ENCODE measurements at regions of chrX and their contacts with region 1.

Region 1: GRCh38 chrX:20266810-20267606 is at the start of gene RPS6KA3:
- DNase-seq: peak; percentile 80
- ATAC-seq: peak; percentile 83
- H3K4me3 Mint-ChIP-seq: peak within 1 kb of the TSS; percentile 92
- H3K27ac Mint-ChIP-seq: peak within 1 kb of the TSS; percentile 90
- H3K4me1 Mint-ChIP-seq: peaks cover 22% of the 10 kb centered on the region
- H3K27me3 Mint-ChIP-seq: no peaks in the 10 kb centered on the region
- CTCF ChIP-seq: no peak
- total RNA-seq, gene RPS6KA3: 36.1 and 40.5 TPM in 2 replicates

Region 2: DNA sequence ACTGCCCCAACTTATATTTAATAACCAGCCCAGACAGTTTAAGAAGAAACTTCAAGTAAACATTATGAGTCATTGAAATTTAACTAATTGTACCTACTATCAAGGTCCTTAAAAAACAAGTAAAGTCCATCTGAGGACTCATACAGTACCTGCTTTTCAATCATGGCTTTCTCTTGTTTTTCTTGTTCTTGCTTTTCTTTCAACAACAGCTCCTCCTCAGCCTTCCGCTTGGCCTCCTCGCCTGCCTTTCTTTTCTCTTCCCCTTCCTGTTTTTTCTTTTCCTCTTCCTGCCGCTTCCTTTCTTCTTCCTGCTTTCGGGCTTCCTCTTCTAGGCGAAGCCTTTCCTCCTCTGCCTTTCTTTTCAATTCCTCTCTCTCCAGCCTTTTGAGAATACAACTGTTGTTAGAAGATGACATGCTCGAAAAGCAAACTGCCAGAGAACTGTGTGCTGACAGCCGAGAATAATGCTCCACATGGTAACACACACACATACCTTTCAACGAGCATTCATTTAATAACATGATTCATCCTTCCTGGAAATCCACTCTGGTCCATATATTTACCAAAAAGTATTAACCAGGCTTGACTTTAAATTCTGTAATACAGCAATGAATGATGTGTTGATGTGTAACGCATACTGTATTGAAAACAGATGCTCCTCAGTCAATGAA is 250.9 kb before region 1 on chrX:
- CTCF ChIA-PET with region 1: no interaction called
- POLR2A ChIA-PET with region 1: no interaction called
- intact Hi-C with region 1: no loop called
- DNase-seq: no peak
- ATAC-seq: no peak
- H3K4me3 Mint-ChIP-seq: no peak overlapping the region
- H3K27ac Mint-ChIP-seq: no peak overlapping the region
- H3K4me1 Mint-ChIP-seq: peaks cover 11% of the 10 kb centered on the region
- H3K27me3 Mint-ChIP-seq: no peaks in the 10 kb centered on the region
- CTCF ChIP-seq: no peak

Region 3: DNA sequence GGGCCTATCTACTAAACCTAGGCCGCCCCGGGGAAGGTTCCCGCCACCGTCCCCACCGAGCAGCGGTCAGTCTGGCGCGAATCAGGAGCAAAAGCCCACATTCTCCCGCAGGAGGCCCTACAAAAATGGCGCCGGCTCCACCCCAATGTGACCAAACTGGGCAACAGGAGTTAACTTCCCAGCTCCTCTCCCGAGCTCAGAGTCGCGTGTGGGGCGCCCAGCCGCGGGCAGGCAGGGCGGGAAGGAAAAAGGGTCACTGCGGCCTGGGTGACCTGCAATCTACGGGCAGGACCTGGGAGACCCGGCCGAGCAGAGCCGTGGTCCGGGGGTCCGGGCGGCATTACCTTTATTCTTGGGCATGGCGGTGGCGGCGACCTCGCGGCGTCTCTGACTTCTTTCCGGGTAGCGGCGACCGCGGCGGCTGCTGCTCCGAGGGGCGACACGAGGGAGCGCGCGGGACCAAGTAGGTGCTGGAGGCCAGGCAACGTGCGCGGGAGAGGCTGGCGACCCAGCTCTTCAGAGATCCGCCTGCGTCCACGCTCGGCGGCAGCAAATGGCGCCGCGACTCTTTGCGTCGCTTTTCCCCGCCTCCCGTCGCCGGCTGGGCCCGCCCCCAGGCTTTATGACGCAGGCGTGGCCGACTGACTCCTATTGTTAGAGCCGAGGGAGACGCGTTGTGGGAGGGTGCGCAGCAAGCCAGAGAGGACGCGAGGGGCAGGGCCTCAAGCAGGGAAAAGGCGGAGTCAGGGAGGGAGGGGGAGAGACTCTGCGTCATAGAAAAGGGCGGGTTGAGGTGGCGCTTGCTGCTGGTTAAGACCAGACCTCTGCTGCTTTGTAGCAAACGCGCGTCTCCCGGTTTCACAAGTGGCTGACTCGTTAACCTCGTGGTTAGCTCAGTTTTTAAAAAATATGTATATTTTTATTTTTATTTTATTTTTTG is 125.5 kb before region 1 on chrX and contains the start of gene EIF1AX:
- CTCF ChIA-PET with region 1: no interaction called
- POLR2A ChIA-PET with region 1: interaction called, 4 read pairs
- intact Hi-C with region 1: loop called (anchors 1 kb)
- DNase-seq: peak; percentile 88
- ATAC-seq: peak; percentile 99
- H3K4me3 Mint-ChIP-seq: peak within 1 kb of the TSS; percentile 88
- H3K27ac Mint-ChIP-seq: peak within 1 kb of the TSS; percentile 83
- H3K4me1 Mint-ChIP-seq: peaks cover 23% of the 10 kb centered on the region
- H3K27me3 Mint-ChIP-seq: no peaks in the 10 kb centered on the region
- CTCF ChIP-seq: no peak
- total RNA-seq, gene EIF1AX: 58.8 and 59.4 TPM in 2 replicates

Region 4: GRCh38 chrX:20197641-20198210 is 69.3 kb before region 1 on chrX:
- CTCF ChIA-PET with region 1: no interaction called
- POLR2A ChIA-PET with region 1: no interaction called
- intact Hi-C with region 1: no loop called
- DNase-seq: no peak
- ATAC-seq: no peak
- H3K4me3 Mint-ChIP-seq: no peak overlapping the region
- H3K27ac Mint-ChIP-seq: no peak overlapping the region
- H3K4me1 Mint-ChIP-seq: peaks cover 1% of the 10 kb centered on the region
- H3K27me3 Mint-ChIP-seq: no peaks in the 10 kb centered on the region
- CTCF ChIP-seq: no peak

Region 5: GRCh38 chrX:20320461-20321159 is 53.6 kb after region 1 on chrX:
- CTCF ChIA-PET with region 1: no interaction called
- POLR2A ChIA-PET with region 1: interaction called, 5 read pairs
- intact Hi-C with region 1: loop called (anchors 2 kb)
- DNase-seq: peak; percentile 16
- ATAC-seq: peak; percentile 92
- H3K4me3 Mint-ChIP-seq: peak overlapping the region; percentile 54
- H3K27ac Mint-ChIP-seq: peak overlapping the region; percentile 82
- H3K4me1 Mint-ChIP-seq: peaks cover 40% of the 10 kb centered on the region
- H3K27me3 Mint-ChIP-seq: no peaks in the 10 kb centered on the region
- CTCF ChIP-seq: no peak

Region 6: GRCh38 chrX:20347481-20347880 is 80.5 kb after region 1 on chrX:
- CTCF ChIA-PET with region 1: no interaction called
- POLR2A ChIA-PET with region 1: no interaction called
- intact Hi-C with region 1: no loop called
- DNase-seq: no peak
- ATAC-seq: no peak
- H3K4me3 Mint-ChIP-seq: no peak overlapping the region
- H3K27ac Mint-ChIP-seq: no peak overlapping the region
- H3K4me1 Mint-ChIP-seq: no peaks in the 10 kb centered on the region
- H3K27me3 Mint-ChIP-seq: no peaks in the 10 kb centered on the region
- CTCF ChIP-seq: no peak

Region 7: DNA sequence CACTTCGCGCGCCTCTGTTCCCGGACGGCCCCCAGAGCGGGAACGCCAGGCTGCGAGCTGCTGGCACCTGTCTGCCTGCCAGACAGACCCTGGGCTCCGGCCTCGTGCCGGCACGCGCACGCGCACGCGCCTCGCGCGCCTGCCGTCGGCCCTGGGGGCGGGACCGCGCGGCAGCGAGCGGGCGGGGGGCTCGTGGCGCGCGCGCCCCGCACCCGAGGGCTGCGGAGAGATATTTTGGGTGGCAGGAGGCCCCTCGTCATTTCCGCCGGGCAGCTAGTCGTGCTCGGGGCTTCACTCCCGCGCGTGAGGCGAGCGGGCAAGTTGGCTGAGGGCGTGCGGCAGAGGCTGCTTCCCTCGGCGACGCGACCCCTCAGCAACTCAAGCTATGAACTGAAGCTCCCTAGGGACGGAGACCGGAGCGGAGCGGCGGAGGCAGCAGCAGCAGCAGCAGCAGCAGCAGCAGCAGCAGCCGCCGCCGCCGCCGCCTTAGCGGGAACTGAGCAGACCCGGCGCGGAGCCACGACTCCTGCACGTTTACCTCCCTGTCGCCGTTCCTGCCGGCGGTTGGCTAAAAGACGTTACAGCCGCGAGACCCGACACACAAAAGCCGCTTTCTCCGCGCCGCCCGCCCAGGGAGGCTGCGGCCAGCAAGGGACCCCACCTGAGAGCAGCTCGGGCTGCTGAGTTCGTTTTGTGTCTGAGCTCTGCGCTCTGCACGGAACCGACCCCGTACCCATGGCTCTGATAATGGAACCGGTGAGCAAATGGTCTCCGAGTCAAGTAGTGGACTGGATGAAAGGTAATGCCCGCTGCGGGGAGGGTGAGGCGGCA is 1107.4 kb after region 1 on chrX and contains the start of gene CNKSR2:
- CTCF ChIA-PET with region 1: no interaction called
- POLR2A ChIA-PET with region 1: no interaction called
- intact Hi-C with region 1: loop called (anchors 10 kb)
- DNase-seq: peak; percentile 74
- ATAC-seq: peak; percentile 77
- H3K4me3 Mint-ChIP-seq: peak within 1 kb of the TSS; percentile 92
- H3K27ac Mint-ChIP-seq: peak within 1 kb of the TSS; percentile 86
- H3K4me1 Mint-ChIP-seq: peaks cover 30% of the 10 kb centered on the region
- H3K27me3 Mint-ChIP-seq: no peaks in the 10 kb centered on the region
- CTCF ChIP-seq: no peak
- total RNA-seq, gene CNKSR2: 15.6 and 15.7 TPM in 2 replicates

Measured in activated B cell treated with CpG ODN at 0.5 μM for 24 hours (primary cell).